SK-N-SH (cell line): ENCODE measurements at regions of chr5 and their contacts with region 1.

Region 1: GRCh38 chr5:102681407-102681983 is 73.6 kb upstream of the PAM start:
- DNase-seq: peak; percentile 70
- H3K4me3 ChIP-seq: no peak overlapping the region; a peak in 1 of 4 replicates
- H3K27ac ChIP-seq: peak overlapping the region in 1 of 2 experiments; percentile 34; a peak in 1 of 4 replicates
- H3K4me1 ChIP-seq: peaks cover 2 to 14% of the 10 kb centered on the region in 2 experiments; a peak in 3 of 4 replicates
- H3K27me3 ChIP-seq: no peaks in the 10 kb centered on the region
- CTCF ChIP-seq: peak; percentile 88
- EP300 ChIP-seq: no peak
- RAD21 ChIP-seq: peak; percentile 93

Region 2: DNA sequence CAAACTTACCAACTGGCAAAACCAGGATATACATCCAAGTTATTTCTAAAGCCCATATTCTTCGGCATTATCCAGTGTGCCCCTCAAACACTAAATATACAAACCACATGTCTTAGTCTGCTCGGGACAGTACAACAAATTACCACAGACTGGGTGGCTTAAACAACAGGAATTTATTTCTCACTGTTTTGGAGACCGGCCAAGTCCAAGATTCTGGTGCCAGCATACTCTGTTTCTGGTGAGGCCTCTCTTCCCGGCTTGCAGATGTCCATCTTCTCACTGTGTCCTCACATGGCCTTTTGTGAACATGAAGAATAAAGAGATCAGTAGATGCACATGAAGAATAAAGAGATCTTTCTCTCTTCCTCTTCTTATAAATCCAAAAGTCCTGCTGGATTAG is 169.8 kb before region 1 on chr5:
- CTCF ChIA-PET with region 1: no interaction called
- POLR2A ChIA-PET with region 1: no interaction called
- DNase-seq: no peak
- H3K4me3 ChIP-seq: no peak overlapping the region; a peak in 1 of 4 replicates
- H3K27ac ChIP-seq: peak overlapping the region in 1 of 2 experiments; percentile 78; a peak in 1 of 4 replicates
- H3K4me1 ChIP-seq: peaks cover 8 to 9% of the 10 kb centered on the region in 2 experiments; a peak in 3 of 4 replicates
- H3K27me3 ChIP-seq: no peaks in the 10 kb centered on the region
- CTCF ChIP-seq: no peak
- EP300 ChIP-seq: no peak
- RAD21 ChIP-seq: no peak

Region 3: DNA sequence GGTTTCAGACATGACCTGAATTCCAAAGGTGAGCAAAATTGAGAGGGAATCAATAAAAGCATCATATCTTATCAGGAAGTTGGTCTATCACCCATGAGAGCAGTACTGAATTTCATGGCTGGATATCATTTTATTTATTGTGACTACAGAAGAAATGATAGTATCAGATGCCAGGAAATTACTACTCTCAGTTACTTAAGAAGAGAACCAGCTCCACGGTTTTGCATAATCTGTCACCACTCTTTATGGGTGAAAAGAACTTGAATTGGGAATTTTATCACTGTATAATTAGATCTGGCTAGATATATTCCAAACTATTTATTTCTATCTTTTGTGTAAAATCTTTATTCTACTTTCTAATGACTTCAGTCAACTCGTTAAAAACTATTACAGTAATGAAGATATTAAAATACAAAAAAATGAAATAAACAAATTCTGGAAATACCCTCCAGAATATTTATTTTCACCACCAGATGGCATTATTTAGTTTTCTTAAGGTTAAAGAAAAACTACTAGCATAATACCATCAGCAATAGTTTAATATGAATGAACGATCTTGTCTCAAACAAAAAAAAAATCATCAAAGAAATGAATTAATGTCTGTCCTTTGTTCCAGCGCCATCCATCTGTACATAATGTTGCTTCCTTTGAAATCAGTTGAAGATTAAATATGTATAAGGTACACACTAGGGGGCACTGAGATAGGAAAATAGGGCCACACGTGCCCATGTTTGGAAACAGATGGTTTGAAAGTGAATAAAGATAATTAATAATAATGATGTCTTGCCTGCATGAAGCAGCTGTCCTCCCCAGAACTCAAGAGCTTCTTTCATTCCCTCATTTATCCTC is 98.0 kb before region 1 on chr5:
- CTCF ChIA-PET with region 1: interaction called, 27 read pairs
- POLR2A ChIA-PET with region 1: no interaction called
- DNase-seq: peak; percentile 8
- H3K4me3 ChIP-seq: no peak overlapping the region; a peak in 1 of 4 replicates
- H3K27ac ChIP-seq: no peak overlapping the region; a peak in 1 of 4 replicates
- H3K4me1 ChIP-seq: peaks cover 0 to 2% of the 10 kb centered on the region in 2 experiments; a peak in 2 of 4 replicates
- H3K27me3 ChIP-seq: no peaks in the 10 kb centered on the region
- CTCF ChIP-seq: peak; percentile 76
- EP300 ChIP-seq: no peak
- RAD21 ChIP-seq: peak; percentile 64

Region 4: GRCh38 chr5:102700120-102700831 is 18.8 kb after region 1 on chr5:
- CTCF ChIA-PET with region 1: interaction called, 13 read pairs
- POLR2A ChIA-PET with region 1: no interaction called
- DNase-seq: no peak
- H3K4me3 ChIP-seq: no peak overlapping the region
- H3K27ac ChIP-seq: no peak overlapping the region
- H3K4me1 ChIP-seq: no peaks in the 10 kb centered on the region; a peak in 1 of 4 replicates
- H3K27me3 ChIP-seq: no peaks in the 10 kb centered on the region
- CTCF ChIP-seq: no peak
- EP300 ChIP-seq: no peak
- RAD21 ChIP-seq: no peak

Region 5: GRCh38 chr5:102782311-102782770 is 100.8 kb after region 1 on chr5:
- CTCF ChIA-PET with region 1: interaction called, 13 read pairs
- POLR2A ChIA-PET with region 1: no interaction called
- DNase-seq: no peak
- H3K4me3 ChIP-seq: no peak overlapping the region
- H3K27ac ChIP-seq: no peak overlapping the region
- H3K4me1 ChIP-seq: peaks cover 5 to 28% of the 10 kb centered on the region in 2 experiments
- H3K27me3 ChIP-seq: no peaks in the 10 kb centered on the region
- CTCF ChIP-seq: no peak
- EP300 ChIP-seq: no peak
- RAD21 ChIP-seq: no peak

Region 6: GRCh38 chr5:102999191-102999590 is 317.7 kb after region 1 on chr5:
- CTCF ChIA-PET with region 1: no interaction called
- POLR2A ChIA-PET with region 1: no interaction called
- DNase-seq: no peak
- H3K4me3 ChIP-seq: no peak overlapping the region
- H3K27ac ChIP-seq: no peak overlapping the region
- H3K4me1 ChIP-seq: no peaks in the 10 kb centered on the region; a peak in 1 of 4 replicates
- H3K27me3 ChIP-seq: no peaks in the 10 kb centered on the region
- CTCF ChIP-seq: no peak
- EP300 ChIP-seq: no peak
- RAD21 ChIP-seq: no peak

Region 7: GRCh38 chr5:103041071-103041676 is 359.7 kb after region 1 on chr5:
- CTCF ChIA-PET with region 1: interaction called, 32 read pairs
- POLR2A ChIA-PET with region 1: no interaction called
- DNase-seq: peak; percentile 48
- H3K4me3 ChIP-seq: no peak overlapping the region
- H3K27ac ChIP-seq: no peak overlapping the region
- H3K4me1 ChIP-seq: no peaks in the 10 kb centered on the region
- H3K27me3 ChIP-seq: no peaks in the 10 kb centered on the region
- CTCF ChIP-seq: peak; percentile 66
- EP300 ChIP-seq: no peak
- RAD21 ChIP-seq: peak; percentile 90